ENCODE measurements at regions of chr6 and their contacts with region 1.

Region 1: DNA sequence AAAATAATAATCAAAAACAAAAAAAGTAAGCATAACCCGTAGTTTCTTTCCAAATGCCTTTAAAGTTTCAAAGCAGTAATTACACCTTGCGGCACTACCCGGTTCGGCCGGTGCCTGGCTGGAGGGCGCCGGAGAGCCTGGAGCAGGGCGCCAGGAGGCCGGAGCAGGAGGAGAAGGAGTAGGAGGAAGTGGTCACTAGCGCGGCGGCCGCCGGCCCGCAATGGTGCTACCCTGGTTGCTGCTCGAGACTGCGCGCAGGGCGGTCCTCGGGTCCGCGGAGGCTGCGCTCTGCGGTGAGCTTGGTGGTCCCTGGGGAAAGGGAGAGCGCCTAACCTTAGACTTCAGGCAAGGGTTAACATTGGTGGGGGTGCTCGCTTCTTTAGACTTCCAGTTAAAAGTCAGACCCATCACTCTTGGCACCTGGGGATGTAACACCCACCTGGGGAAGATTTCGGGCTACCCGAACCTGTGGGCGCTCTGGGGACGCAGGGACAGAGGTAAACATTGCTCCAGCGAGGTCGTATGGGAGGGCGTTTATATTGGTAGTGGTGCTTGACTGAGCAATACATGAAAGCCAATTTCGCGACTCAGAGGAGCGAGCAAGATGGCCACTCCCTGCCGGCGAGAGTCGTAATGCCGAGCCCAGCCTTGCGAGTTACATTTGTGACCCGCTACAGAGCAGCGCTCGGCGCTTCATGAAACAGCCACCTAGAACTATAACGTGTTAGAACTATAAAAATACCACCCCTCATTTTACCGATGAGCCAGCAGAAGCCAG is 5.8 kb upstream of the USP45 start:
- DNase-seq: peak; percentile 80 to 91
- ATAC-seq: peak; percentile 93 to 96 (median 94)
- H3K4me3 ChIP-seq: peak overlapping the region; percentile 84
- H3K27ac ChIP-seq: peak overlapping the region; percentile 90
- H3K4me1 ChIP-seq: peaks cover 9% of the 10 kb centered on the region
- H3K27me3 ChIP-seq: no peaks in the 10 kb centered on the region
- CTCF ChIP-seq: peak; percentile 87

Region 2: DNA sequence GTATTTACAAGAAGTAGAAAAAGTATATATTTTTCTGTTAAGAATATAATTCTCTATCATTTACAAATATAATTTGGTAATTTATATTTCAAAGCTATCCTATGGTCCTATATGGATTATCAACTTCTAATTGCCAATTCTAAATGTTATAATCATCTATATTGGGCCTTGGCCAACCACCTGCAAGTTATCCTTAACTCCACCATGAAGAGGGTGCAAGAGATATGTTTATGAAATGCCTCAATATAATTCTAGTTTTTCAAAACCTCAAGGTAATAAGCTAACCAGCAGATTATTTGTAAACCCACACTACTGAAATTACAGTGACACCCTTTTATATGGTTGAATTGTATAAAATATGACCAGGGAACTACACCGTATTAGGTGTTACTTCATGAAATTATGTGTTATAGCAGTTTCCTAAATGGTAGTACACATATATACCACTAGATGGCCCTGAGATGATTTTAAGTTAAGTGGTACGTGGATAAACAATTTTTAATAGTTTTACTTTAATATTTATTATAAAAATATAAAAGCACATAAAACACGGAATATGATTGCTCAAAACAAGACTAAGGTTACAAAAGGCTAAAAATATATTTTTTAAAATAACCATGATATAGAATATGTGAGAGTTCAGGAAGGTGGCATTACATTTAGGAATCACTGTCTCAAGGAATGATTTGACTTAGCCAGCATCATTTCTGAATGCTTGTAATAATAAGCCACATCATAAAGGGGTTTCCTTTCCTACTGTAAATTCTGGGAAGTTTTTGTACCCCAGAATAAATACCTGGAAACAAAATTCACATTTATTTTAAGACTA is 86.1 kb before region 1 on chr6:
- intact Hi-C with region 1: no loop called
- DNase-seq: no peak
- ATAC-seq: peak in 3 of 4 donors; percentile 67 to 85 (median 67)
- H3K4me3 ChIP-seq: no peak overlapping the region
- H3K27ac ChIP-seq: no peak overlapping the region
- H3K4me1 ChIP-seq: no peaks in the 10 kb centered on the region
- H3K27me3 ChIP-seq: no peaks in the 10 kb centered on the region
- CTCF ChIP-seq: peak; percentile 77

Region 3: DNA sequence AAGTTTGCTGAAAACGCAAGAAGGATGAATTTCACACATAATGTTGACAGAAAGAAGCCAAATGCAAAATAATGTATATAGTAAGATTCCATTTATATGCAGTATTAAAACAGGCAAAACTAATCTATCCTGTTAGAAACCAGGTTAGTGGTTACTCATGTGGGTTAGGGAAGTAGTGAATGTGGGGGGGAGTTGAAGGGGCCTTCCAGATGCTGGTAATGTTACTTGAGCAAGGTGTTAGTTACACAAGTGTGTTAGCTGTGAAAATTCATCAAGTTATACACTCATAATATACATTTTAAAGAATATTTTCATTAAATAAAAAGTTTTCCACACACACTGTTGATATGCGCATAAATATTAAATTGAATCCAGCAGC is 35.7 kb before region 1 on chr6:
- intact Hi-C with region 1: no loop called
- DNase-seq: no peak
- ATAC-seq: no peak
- H3K4me3 ChIP-seq: no peak overlapping the region
- H3K27ac ChIP-seq: no peak overlapping the region
- H3K4me1 ChIP-seq: no peaks in the 10 kb centered on the region
- H3K27me3 ChIP-seq: no peaks in the 10 kb centered on the region
- CTCF ChIP-seq: no peak

Region 4: DNA sequence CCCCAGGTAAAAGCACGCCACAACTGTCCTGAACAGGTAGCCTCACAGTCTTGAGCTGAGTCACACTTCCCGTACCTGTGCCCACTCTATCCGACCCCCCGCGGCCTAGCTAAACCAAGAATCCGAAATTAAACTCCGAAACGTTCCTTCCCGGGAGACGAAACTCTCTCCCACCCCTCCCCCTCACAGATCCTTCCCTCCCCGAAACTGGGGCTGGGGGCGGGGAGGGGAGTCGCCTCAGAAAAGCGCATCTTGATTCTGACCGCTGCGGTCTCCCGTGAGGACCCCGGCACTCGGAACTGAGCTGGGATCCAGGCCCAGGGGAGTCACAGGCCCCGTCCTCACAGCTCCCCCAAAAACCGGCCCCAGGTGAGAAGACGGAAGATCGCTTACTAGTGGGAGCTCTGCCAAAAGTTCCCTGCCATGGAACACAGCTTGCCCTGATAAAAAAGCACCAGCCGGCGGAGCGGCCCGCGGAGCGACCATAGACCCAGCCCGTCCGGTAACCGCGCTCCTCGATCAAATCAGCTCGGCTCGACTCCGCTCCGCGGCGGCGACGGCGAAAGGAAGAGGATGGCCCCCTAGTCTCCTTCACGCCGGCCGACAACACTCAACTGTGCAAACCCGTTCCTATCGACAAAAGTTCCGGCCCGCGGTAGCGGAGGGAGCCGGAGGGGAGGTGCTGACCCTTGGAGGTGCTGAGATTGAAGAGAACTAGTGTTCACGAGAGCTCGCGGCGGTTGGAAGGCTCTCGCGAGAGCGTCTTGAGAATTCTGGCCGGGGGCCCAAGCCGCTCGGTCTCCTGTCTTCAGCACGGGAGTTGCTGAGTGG is 47.3 kb after region 1 on chr6 and contains the start of gene CCNC:
- intact Hi-C with region 1: loop called (anchors 1 to 5 kb)
- DNase-seq: peak; percentile 92 to 96
- ATAC-seq: peak; percentile 97 to 99 (median 99)
- H3K4me3 ChIP-seq: peak within 1 kb of the TSS; percentile 97
- H3K27ac ChIP-seq: peak within 1 kb of the TSS; percentile 90
- H3K4me1 ChIP-seq: peaks cover 28% of the 10 kb centered on the region
- H3K27me3 ChIP-seq: no peaks in the 10 kb centered on the region
- CTCF ChIP-seq: no peak
- total RNA-seq, gene CCNC: 15.2 to 24.5 (median 19.3) TPM